Calu3 (cell line): ENCODE measurements at regions of chr7 and their contacts with region 1.

Region 1: DNA sequence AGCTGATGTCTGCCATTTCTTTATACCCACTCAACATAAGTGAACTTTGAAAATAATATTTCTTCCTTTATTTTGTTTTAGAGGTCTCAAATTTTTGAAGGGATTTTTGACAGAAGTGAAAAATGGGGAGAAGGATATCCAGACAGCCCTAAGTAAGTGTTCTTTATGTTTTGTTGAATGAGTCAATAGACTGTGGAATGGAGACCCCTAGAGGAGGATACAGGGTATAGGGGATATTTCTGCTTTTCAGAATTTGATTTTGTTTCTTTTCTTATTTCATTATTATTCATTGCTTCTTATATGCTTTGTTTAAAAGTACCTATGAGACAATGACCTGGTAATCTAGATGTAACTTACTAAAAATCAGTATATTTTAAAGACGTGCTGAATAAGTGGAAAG is 34.4 kb downstream of the PLEKHA8 start:
- DNase-seq: no peak
- H3K4me3 Mint-ChIP-seq: no peak overlapping the region
- H3K27ac Mint-ChIP-seq: no peak overlapping the region
- H3K4me1 Mint-ChIP-seq: no peaks in the 10 kb centered on the region
- H3K27me3 Mint-ChIP-seq: no peaks in the 10 kb centered on the region
- CTCF ChIP-seq: peak; percentile 49

Region 2: DNA sequence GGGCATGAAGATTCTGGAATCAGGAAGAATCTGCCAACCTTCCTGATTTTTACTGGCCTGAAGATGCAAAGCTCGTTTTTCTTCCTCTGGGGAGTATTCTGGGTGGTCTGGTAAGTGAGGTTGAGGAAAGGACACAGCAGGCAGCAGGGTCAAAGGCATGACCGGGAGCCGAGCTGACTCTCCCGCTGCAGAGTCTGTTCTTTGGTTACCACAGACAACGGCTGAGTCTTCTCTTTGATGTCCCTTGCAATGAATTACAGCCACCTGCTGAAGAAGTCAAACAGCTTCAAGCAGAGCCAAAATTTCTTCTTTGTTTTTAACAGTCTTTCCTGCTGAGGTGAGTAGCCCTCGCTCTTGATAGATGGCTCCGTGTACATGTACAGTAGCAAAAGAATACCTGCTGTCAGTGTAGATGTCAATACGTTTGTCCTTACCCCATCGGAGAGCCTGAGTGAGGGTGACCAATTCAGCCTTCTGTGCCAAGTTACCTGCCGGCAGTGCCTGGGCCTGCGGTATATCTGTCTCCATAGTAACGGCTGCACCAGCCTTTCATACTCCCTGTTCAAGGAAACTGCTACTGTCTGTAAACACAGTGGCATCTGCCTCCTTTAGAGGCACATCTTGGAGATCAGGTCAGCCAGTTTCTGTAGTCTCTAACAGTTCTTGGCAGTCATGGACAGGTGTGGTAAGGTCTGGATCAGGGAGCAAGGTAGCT is 422.6 kb before region 1 on chr7:
- CTCF ChIA-PET with region 1: interaction called, 3 read pairs
- intact Hi-C with region 1: loop called (anchors 5 kb)
- DNase-seq: no peak
- H3K4me3 Mint-ChIP-seq: no peak overlapping the region
- H3K27ac Mint-ChIP-seq: no peak overlapping the region
- H3K4me1 Mint-ChIP-seq: peaks cover 25% of the 10 kb centered on the region
- H3K27me3 Mint-ChIP-seq: no peaks in the 10 kb centered on the region
- CTCF ChIP-seq: no peak

Region 3: DNA sequence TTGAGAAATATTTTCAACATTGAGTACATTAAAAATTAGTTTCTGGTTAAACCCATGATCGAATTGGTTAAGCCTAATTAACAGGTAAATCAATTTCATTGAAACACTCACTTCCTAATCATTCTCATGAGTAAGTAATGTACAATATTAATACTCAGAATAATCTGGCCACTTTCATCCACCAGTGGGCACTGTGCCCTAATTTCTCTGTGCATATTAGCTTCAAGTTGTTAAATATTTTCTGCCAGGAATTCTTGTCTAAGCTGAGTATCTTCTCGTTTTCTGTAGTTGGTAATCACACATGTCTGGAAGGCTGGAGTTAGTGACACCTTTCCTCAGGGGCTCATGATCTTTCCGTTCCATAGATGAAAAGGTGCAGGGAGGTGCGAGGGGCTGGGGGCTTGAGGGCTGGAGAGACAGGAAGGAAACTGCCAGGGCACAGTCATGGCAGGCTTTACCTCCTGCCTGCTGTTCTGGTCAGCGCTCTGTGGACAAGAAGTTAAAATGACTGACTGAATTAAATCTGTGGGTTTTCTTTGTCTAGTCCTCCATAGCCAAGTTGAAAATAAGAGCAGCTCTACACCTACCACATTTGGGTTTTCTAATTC is 184.4 kb before region 1 on chr7:
- CTCF ChIA-PET with region 1: interaction called, 10 read pairs
- intact Hi-C with region 1: loop called (anchors 1 kb)
- DNase-seq: peak; percentile 61
- H3K4me3 Mint-ChIP-seq: no peak overlapping the region
- H3K27ac Mint-ChIP-seq: no peak overlapping the region
- H3K4me1 Mint-ChIP-seq: no peaks in the 10 kb centered on the region
- H3K27me3 Mint-ChIP-seq: no peaks in the 10 kb centered on the region
- CTCF ChIP-seq: peak; percentile 62

Region 4: DNA sequence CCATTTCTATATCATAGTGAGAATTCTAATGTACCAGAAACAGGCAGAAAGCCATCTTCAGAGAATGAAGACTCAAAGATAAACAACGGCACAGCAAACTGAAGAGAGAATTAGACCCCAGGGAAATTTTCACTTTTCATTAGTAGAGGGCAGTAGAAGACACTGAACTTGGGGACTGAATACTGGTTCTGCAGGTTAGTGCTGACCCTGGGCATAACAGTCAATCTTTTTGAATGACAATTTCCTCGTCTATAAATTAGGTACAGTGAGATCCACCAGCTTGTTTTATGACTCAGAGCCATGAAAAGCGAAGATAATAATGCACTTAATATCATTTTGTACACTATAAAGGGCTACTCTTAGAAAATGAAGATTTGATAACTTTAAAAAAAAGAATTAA is 49.8 kb before region 1 on chr7:
- CTCF ChIA-PET with region 1: interaction called, 3 read pairs
- intact Hi-C with region 1: loop called (anchors 2 kb)
- DNase-seq: peak; percentile 30
- H3K4me3 Mint-ChIP-seq: no peak overlapping the region
- H3K27ac Mint-ChIP-seq: no peak overlapping the region
- H3K4me1 Mint-ChIP-seq: peaks cover 9% of the 10 kb centered on the region
- H3K27me3 Mint-ChIP-seq: no peaks in the 10 kb centered on the region
- CTCF ChIP-seq: no peak

Region 5: DNA sequence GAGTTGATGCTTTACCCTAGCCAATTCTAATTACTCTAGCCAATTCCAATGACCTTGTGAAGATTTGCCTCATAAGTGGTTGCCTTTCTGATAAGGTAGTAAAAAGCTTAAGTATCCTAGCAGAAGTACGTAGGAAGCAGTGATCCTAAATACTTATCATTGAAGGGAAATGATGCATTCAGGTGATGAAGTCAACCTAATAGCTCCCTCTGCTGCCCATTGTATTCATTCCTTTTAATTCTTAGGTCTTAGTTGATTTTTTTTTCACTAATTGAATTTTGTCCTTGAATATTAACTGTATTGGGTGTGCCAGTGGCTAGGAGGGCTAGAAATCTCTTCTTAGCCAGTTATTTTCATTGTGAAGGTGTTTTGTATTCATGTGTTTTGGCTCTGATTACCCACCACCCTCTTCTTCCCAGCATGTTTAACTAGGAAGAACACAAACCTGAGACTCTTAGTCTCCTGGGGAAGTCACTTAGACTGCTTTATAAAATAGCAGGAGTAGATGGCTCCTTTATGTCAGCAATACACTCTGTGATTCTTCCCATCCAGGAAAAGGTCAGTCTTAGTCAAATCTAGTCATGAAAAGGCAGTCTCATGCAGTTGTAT is 11.9 kb after region 1 on chr7:
- CTCF ChIA-PET with region 1: interaction called, 10 read pairs
- intact Hi-C with region 1: no loop called
- DNase-seq: peak; percentile 23
- H3K4me3 Mint-ChIP-seq: no peak overlapping the region
- H3K27ac Mint-ChIP-seq: no peak overlapping the region
- H3K4me1 Mint-ChIP-seq: no peaks in the 10 kb centered on the region
- H3K27me3 Mint-ChIP-seq: no peaks in the 10 kb centered on the region
- CTCF ChIP-seq: peak; percentile 54

Region 6: GRCh38 chr7:30102281-30102680 is 39.7 kb after region 1 on chr7:
- CTCF ChIA-PET with region 1: no interaction called
- intact Hi-C with region 1: no loop called
- DNase-seq: no peak
- H3K4me3 Mint-ChIP-seq: no peak overlapping the region
- H3K27ac Mint-ChIP-seq: no peak overlapping the region
- H3K4me1 Mint-ChIP-seq: no peaks in the 10 kb centered on the region
- H3K27me3 Mint-ChIP-seq: no peaks in the 10 kb centered on the region
- CTCF ChIP-seq: no peak